GM10248 (cell line): ENCODE measurements at regions of chr5 and their contacts with region 1.

Region 1: GRCh38 chr5:115419846-115420585 is 123.6 kb upstream of the CCDC112 start:
- DNase-seq: no peak
- CTCF ChIP-seq: no peak

Region 2: DNA sequence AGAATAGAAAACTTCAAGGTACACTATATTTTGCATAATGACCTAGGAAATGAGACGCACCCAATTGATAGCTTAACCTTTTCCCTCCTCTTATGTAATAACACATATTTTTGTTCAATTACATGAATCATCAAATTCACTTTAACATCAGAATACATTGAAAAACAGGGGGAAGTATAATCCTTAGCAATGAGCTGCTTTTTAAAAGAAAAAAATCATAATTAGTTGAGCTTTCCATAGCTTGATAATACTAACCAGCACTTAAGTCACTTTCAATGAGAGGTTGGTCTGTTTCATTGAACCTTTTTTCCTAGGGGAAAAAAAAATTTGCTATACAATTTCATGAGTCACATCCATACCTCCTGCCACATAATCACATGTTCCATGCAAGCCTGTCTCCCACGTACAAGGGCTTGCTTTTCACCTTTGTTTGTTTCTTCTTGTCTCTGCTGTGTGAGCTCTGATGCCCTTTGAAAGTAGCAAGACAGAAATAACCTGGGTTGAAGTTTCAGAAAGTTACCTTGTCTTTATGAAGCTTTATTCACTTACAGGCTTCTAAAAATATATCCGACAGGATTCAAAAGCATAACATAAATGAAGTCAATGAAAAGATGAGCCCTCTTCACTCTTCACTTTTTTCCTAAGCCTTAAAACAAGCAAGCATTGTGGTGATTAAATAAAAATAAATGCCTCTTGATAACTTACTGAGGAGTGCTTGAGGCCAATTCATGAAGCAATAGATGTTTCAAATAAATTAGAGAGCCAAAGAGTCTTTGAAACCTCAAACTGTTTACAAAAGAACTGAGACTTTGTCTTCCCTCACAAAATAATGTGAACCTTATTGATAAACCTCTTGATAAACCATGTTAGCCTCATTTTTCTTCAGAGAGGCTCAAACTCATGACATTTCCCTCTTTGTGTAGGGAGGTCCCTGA is 16.0 kb after region 1 on chr5:
- CTCF ChIA-PET with region 1: interaction called, 11 read pairs
- POLR2A ChIA-PET with region 1: no interaction called
- DNase-seq: no peak
- CTCF ChIP-seq: no peak